Heart right ventricle (tissue), 16 donors: ENCODE measurements at regions of chr20 and their contacts with region 1.

Region 1: DNA sequence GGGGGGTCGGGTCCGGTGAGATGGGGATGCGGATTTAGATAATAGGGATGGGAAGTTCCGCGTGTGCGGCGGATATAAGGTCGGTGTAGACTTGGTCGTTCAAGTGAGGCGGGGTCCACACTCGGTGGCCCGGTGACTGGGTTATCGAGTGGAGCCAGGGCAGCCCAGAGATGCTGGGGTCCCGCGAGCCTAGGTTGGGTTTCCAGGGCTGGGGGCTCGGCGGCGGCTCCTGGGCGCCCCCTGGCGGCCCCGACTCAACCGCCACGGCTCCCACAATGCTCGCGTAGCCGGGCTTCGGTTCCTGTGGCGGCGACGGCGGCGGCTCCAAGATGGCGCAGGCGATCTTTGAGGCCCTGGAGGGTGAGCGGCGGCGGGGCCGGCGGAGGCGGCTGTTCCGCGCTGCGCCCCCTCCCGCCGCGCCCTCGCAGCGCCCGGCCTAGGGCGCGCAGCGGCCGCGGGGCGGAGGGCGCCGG is at the start of gene ZNF341:
- DNase-seq: peak; percentile 88 to 91
- ATAC-seq: peak; percentile 83 to 91 (median 88)
- H3K4me3 ChIP-seq: peak within 1 kb of the TSS; percentile 33 to 81 (median 68)
- H3K27ac ChIP-seq: peak within 1 kb of the TSS; percentile 90 to 98 (median 95)
- H3K4me1 ChIP-seq: peaks cover 3 to 31% (median 23%) of the 10 kb centered on the region in 9 donors
- H3K27me3 ChIP-seq: no peaks in the 10 kb centered on the region
- CTCF ChIP-seq: peak; percentile 88 to 93 (median 91)
- total RNA-seq, gene ZNF341: 0.85 to 2.6 (median 1.5) TPM

Region 2: GRCh38 chr20:33674295-33675135 is 57.2 kb before region 1 on chr20 and contains the start of gene NECAB3:
- intact Hi-C with region 1: loop called in 2 of 10 experiments (anchors 5 kb)
- DNase-seq: peak; percentile 83 to 86
- ATAC-seq: peak; percentile 73 to 91 (median 85)
- H3K4me3 ChIP-seq: peak within 1 kb of the TSS; percentile 56 to 92 (median 71)
- H3K27ac ChIP-seq: peak within 1 kb of the TSS; percentile 73 to 94 (median 85)
- H3K4me1 ChIP-seq: peaks cover 9 to 53% (median 28%) of the 10 kb centered on the region in 9 donors
- H3K27me3 ChIP-seq: no peaks in the 10 kb centered on the region
- CTCF ChIP-seq: no peak
- total RNA-seq, gene NECAB3: 53.7 to 92.8 (median 77.2) TPM

Region 3: GRCh38 chr20:33686100-33686983 is 45.4 kb before region 1 on chr20 and contains the start of gene E2F1:
- intact Hi-C with region 1: loop called in 1 of 10 experiments (anchors 5 kb)
- DNase-seq: peak; percentile 95 to 97
- ATAC-seq: peak; percentile 97 to 100 (median 99)
- H3K4me3 ChIP-seq: peak within 1 kb of the TSS in 8 of 10 donors; percentile 21 to 50 (median 40)
- H3K27ac ChIP-seq: peak within 1 kb of the TSS in 8 of 10 donors; percentile 10 to 56 (median 36)
- H3K4me1 ChIP-seq: peaks cover 0 to 47% (median 20%) of the 10 kb centered on the region in 9 donors
- H3K27me3 ChIP-seq: no peaks in the 10 kb centered on the region
- CTCF ChIP-seq: peak in 8 of 9 donors; percentile 35 to 72 (median 50)
- total RNA-seq, gene E2F1: 0.44 to 3.4 (median 1.5) TPM

Region 4: DNA sequence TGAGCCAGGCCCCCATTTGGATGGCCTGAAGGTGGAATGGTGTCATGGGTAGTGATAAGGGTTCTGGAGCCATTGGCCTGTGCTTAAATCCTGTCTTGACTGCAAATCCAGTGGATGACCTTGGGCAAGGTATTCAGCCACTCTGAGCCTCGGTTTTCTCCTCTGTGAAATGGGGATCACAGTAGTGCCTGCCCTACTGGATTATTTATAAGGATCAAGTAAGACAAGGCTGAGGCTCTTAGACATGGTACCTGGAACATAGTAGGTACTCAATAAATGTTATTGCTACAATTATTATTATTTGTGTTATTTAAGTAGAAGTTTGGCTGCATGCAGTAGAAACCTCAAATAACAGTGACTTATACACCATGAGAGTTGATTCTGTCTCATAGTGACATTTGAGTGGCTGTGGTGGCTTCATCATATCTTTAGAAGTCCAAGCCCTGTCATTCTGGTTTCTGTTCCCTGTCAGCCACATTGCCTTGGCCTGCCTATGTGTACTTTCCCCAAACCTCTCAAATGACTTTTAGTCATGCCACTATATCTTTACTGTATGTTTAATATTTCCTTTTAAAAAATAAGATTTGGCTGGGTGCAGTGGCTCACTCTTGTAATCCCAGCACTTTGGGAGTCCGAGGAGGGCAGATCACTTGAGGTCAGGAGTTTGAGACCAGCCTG is 41.8 kb after region 1 on chr20:
- intact Hi-C with region 1: no loop called
- DNase-seq: no peak
- ATAC-seq: peak in 4 of 8 donors; percentile 47 to 66 (median 56)
- H3K4me3 ChIP-seq: no peak overlapping the region
- H3K27ac ChIP-seq: peak overlapping the region in 1 of 10 donors; percentile 10
- H3K4me1 ChIP-seq: peaks cover 0 to 9% (median 0%) of the 10 kb centered on the region in 9 donors
- H3K27me3 ChIP-seq: no peaks in the 10 kb centered on the region
- CTCF ChIP-seq: no peak